G401 (cell line): ENCODE measurements at regions of chr9 and their contacts with region 1.

Region 1: GRCh38 chr9:27665136-27665535 is 91.9 kb upstream of the C9orf72 start:
- DNase-seq: no peak

Region 2: DNA sequence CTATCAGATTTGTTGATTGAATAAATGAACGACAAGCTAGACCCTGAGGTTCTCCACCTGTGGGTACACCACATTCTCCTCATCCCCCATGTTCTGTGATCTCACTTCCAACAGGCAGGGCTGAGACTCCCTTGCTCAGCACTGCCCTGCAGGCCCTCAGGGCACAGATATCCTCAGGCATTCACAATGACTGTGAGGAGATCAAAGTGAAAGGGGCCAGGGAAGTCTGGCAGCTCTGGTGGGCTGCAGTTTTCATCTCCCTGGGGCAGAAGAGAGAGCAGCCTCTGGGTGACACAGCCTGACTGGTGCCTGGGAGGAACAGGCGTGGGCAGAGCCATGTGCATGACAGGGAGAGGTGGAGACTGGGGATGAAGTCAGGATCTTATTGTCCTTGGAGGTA is 50.5 kb after region 1 on chr9:
- in situ Hi-C with region 1: loop called (anchors 5 kb)
- DNase-seq: no peak